Activated CD4-positive, alpha-beta memory T cell treated with anti-CD3 and anti-CD28 coated beads for 36 hours (primary cell): ENCODE measurements at regions of chr20 and their contacts with region 1.

Region 1: GRCh38 chr20:24992487-24993205 is at the start of gene APMAP:
- DNase-seq: peak; percentile 97
- H3K4me3 Mint-ChIP-seq: peak within 1 kb of the TSS; percentile 95
- H3K27ac Mint-ChIP-seq: peak within 1 kb of the TSS; percentile 87
- H3K4me1 Mint-ChIP-seq: peaks cover 54% of the 10 kb centered on the region
- H3K27me3 Mint-ChIP-seq: no peaks in the 10 kb centered on the region
- total RNA-seq, gene APMAP: 45.5 to 46.6 TPM

Region 2: GRCh38 chr20:24934101-24934661 is 58.5 kb before region 1 on chr20:
- CTCF ChIA-PET with region 1: interaction called, 4 read pairs
- POLR2A ChIA-PET with region 1: no interaction called
- intact Hi-C with region 1: loop called (anchors 2 kb)
- DNase-seq: no peak
- H3K4me3 Mint-ChIP-seq: no peak overlapping the region
- H3K27ac Mint-ChIP-seq: no peak overlapping the region
- H3K4me1 Mint-ChIP-seq: peaks cover 28% of the 10 kb centered on the region
- H3K27me3 Mint-ChIP-seq: no peaks in the 10 kb centered on the region

Region 3: GRCh38 chr20:25065625-25066338 is 73.1 kb after region 1 on chr20:
- CTCF ChIA-PET with region 1: interaction called, 92 read pairs
- POLR2A ChIA-PET with region 1: interaction called, 6 read pairs
- intact Hi-C with region 1: loop called (anchors 1 kb)
- DNase-seq: peak; percentile 75
- H3K4me3 Mint-ChIP-seq: no peak overlapping the region
- H3K27ac Mint-ChIP-seq: no peak overlapping the region
- H3K4me1 Mint-ChIP-seq: peaks cover 2% of the 10 kb centered on the region
- H3K27me3 Mint-ChIP-seq: peaks cover 13% of the 10 kb centered on the region

Region 4: DNA sequence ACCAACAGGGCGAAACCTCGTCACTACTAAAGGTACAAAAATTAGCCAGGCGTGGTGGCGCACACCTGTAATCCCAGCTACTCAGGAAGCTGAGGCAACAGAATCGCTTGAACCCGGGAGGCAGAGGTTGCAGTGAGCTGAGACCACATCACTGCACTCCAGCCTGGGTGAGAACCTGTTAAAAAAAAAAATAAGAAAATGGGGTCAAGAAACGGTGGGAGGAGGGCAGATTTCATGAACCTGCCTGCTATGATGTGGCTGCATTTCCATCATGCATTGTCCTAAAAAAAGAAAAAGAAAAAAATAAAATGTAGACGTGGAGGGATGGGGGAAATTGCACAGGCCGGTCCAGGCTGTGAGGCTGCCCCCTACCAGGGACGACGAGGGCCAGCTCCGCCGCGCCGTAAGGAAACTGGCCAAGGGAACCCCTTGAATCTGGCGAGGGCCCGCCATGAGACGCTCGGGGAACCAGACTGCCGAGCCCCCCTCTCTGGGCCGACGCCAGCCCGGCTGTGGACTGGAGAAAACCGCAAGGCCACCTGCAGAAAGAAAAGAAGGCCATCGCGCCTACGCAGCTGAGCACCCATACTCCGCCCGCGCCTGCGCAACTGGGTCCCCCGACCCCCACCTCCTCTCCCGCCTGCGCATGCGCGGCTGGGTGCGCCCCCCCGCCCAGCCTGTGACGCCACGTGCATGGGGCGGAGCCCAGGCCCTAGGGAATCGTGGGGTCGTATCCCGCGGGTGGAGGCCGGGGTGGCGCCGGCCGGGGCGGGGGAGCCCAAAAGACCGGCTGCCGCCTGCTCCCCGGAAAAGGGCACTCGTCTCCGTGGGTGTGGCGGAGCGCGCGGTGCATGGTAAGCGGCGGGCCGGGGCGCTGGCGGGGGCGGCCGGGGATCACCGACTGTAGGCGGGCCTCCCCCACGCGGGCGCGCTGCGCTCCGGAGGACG is 202.6 kb after region 1 on chr20 and contains the start of gene ENTPD6:
- CTCF ChIA-PET with region 1: interaction called, 4 read pairs
- POLR2A ChIA-PET with region 1: no interaction called
- intact Hi-C with region 1: loop called (anchors 2 kb)
- DNase-seq: peak; percentile 93
- H3K4me3 Mint-ChIP-seq: peak within 1 kb of the TSS; percentile 89
- H3K27ac Mint-ChIP-seq: peak within 1 kb of the TSS; percentile 73
- H3K4me1 Mint-ChIP-seq: peaks cover 40% of the 10 kb centered on the region
- H3K27me3 Mint-ChIP-seq: no peaks in the 10 kb centered on the region
- total RNA-seq, gene ENTPD6: 48.5 to 51.0 TPM

Region 5: GRCh38 chr20:25390538-25391528 is 398.2 kb after region 1 on chr20 and contains the start of gene ABHD12:
- CTCF ChIA-PET with region 1: no interaction called
- POLR2A ChIA-PET with region 1: no interaction called
- intact Hi-C with region 1: loop called (anchors 5 kb)
- DNase-seq: peak; percentile 97
- H3K4me3 Mint-ChIP-seq: peak within 1 kb of the TSS; percentile 88
- H3K27ac Mint-ChIP-seq: peak within 1 kb of the TSS; percentile 83
- H3K4me1 Mint-ChIP-seq: peaks cover 12% of the 10 kb centered on the region
- H3K27me3 Mint-ChIP-seq: no peaks in the 10 kb centered on the region
- total RNA-seq, gene ABHD12: 22.3 to 24.1 TPM

Region 6: DNA sequence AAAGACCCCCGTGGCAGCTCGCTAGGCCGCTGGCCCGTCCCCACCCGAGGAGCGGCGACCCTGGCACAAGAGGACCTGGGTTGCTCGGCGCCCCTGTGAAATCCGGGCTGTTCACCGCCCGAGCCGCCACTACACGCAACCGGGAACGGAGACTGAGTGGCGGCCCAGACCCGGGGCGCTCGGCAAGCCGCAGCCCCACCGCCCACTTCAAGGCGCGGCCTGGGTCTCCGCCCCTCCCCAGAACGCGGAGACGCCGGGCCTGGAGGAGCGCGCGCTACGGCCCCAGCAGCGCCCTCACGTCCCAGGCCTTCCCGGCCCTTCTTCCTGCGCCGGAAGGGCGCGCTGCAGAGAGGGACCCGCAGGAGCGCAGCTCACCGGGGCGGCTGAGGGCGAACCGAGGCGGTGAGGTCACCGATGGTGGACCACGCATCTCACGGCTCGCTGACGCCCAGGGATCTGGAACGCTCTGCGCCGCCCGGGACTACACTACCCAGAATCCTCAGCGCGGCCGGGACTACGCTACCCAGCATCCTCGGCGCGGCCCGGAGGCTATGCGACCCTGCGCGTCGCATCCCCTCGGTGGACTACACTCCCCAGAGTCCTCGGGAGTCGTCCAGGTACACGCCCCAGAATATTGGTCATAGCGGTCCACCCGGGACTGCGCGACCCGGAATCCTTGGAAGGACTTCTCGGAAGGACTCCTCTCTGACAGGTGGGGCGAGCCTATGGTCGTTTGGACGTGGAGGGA is 703.9 kb after region 1 on chr20 and contains the start of gene ZNF337:
- CTCF ChIA-PET with region 1: no interaction called
- POLR2A ChIA-PET with region 1: no interaction called
- intact Hi-C with region 1: loop called (anchors 2 kb)
- DNase-seq: peak; percentile 97
- H3K4me3 Mint-ChIP-seq: peak within 1 kb of the TSS; percentile 89
- H3K27ac Mint-ChIP-seq: peak within 1 kb of the TSS; percentile 77
- H3K4me1 Mint-ChIP-seq: peaks cover 21% of the 10 kb centered on the region
- H3K27me3 Mint-ChIP-seq: no peaks in the 10 kb centered on the region
- total RNA-seq, gene ZNF337: 12.1 to 12.5 TPM